Activated naive CD8-positive, alpha-beta T cell treated with anti-CD3 and anti-CD28 coated beads, Interleukin-2, amount 10 ng/mL, durations not matched to agents 7 days and 5 days (primary cell): ENCODE measurements at regions of chr3 and their contacts with region 1.

Region 1: DNA sequence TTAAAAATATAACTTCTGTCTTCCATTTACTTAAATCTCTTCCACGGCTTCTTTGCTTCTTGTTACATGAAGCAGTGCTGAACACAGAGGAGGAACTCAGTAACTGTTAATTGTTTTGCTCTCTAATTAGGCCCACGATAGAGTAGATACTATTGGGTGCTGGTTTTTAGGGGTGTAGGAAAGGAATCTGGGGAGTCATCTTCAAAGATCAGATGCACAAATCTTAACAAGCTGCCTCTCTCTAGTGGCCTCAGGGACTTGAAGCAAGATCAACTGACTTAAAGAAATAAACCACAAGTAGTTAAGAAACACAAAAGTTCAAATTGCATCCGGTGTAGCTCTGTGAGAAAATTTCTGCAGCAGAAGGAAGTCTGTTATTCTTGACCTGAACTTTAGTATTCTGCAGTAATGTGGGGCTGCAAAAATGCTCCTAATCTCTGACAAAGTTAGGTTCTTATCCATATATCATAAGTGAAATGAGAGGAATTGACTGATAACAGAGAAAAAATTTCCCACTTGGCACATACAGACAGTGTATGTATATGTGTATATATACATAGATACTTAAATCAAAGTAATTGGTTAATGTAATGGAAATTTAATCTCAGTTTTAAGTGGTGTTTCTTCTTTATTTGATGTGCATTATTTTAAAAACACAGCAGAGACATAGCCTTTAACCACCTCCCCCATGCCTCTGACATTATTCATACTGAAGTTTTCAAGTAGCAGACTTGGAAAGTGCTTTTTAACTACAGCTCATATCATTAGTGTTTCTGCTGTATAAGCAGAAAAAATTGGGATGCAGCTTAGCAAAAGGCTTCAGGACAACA is 51.8 kb downstream of the CHST2 start:
- DNase-seq: no peak
- ATAC-seq: peak; percentile 81
- H3K4me3 Mint-ChIP-seq: peak overlapping the region; percentile 79
- H3K27ac Mint-ChIP-seq: peak overlapping the region; percentile 100
- H3K4me1 Mint-ChIP-seq: peaks cover 46% of the 10 kb centered on the region
- H3K27me3 Mint-ChIP-seq: no peaks in the 10 kb centered on the region

Region 2: GRCh38 chr3:143084856-143085731 is 86.3 kb before region 1 on chr3:
- POLR2A ChIA-PET with region 1: no interaction called
- DNase-seq: no peak
- ATAC-seq: no peak
- H3K4me3 Mint-ChIP-seq: no peak overlapping the region
- H3K27ac Mint-ChIP-seq: no peak overlapping the region
- H3K4me1 Mint-ChIP-seq: no peaks in the 10 kb centered on the region
- H3K27me3 Mint-ChIP-seq: peaks cover 5% of the 10 kb centered on the region

Region 3: GRCh38 chr3:143119009-143119914 is 52.1 kb before region 1 on chr3 and contains the start of gene CHST2:
- POLR2A ChIA-PET with region 1: interaction called, 11 read pairs
- DNase-seq: peak; percentile 82
- ATAC-seq: peak; percentile 76
- H3K4me3 Mint-ChIP-seq: peak within 1 kb of the TSS; percentile 91
- H3K27ac Mint-ChIP-seq: peak within 1 kb of the TSS; percentile 76
- H3K4me1 Mint-ChIP-seq: peaks cover 27% of the 10 kb centered on the region
- H3K27me3 Mint-ChIP-seq: peaks cover 12% of the 10 kb centered on the region
- total RNA-seq, gene CHST2: 2.4 to 3.0 TPM